ENCODE measurements at regions of chr2 and their contacts with region 1.

Region 1: GRCh38 chr2:187453078-187453641 is 5.1 kb upstream of the CALCRL start:
- H3K4me3 Mint-ChIP-seq: no peak overlapping the region
- H3K27ac Mint-ChIP-seq: no peak overlapping the region
- H3K4me1 Mint-ChIP-seq: peaks cover 6% of the 10 kb centered on the region
- H3K27me3 Mint-ChIP-seq: no peaks in the 10 kb centered on the region

Region 2: GRCh38 chr2:186503848-186504606 is 949.1 kb before region 1 on chr2:
- intact Hi-C with region 1: loop called (anchors 10 kb)
- H3K4me3 Mint-ChIP-seq: no peak overlapping the region
- H3K27ac Mint-ChIP-seq: peak overlapping the region; percentile 26
- H3K4me1 Mint-ChIP-seq: peaks cover 7% of the 10 kb centered on the region
- H3K27me3 Mint-ChIP-seq: no peaks in the 10 kb centered on the region

Region 3: GRCh38 chr2:186664385-186665043 is 788.6 kb before region 1 on chr2:
- intact Hi-C with region 1: loop called (anchors 10 kb)
- H3K4me3 Mint-ChIP-seq: no peak overlapping the region
- H3K27ac Mint-ChIP-seq: no peak overlapping the region
- H3K4me1 Mint-ChIP-seq: no peaks in the 10 kb centered on the region
- H3K27me3 Mint-ChIP-seq: no peaks in the 10 kb centered on the region

Region 4: GRCh38 chr2:186862869-186863709 is 590.1 kb before region 1 on chr2:
- intact Hi-C with region 1: loop called (anchors 2 kb)
- H3K4me3 Mint-ChIP-seq: no peak overlapping the region
- H3K27ac Mint-ChIP-seq: no peak overlapping the region
- H3K4me1 Mint-ChIP-seq: no peaks in the 10 kb centered on the region
- H3K27me3 Mint-ChIP-seq: no peaks in the 10 kb centered on the region

Region 5: GRCh38 chr2:186903216-186903615 is 549.9 kb before region 1 on chr2:
- intact Hi-C with region 1: loop called (anchors 1 kb)
- H3K4me3 Mint-ChIP-seq: no peak overlapping the region
- H3K27ac Mint-ChIP-seq: no peak overlapping the region
- H3K4me1 Mint-ChIP-seq: no peaks in the 10 kb centered on the region
- H3K27me3 Mint-ChIP-seq: no peaks in the 10 kb centered on the region

Region 6: DNA sequence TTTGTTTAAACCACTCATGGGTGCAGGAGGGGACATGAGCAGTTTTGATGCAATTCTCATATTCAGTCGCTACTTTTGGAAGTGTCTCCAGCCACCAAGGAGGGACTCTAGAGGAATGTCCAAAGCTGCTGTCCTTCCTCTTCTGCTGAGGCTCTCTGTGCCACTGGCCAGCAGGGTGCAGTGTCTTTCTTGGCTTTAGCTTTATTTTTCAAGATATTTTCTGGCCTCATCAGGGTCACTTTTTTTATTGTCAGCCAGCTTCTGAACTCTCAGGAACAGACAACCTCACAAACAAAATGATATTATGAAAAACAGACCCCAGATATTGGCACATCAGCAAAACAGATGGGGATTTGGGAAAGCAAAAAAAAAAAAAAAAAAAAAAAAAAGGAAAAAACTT is 314.9 kb before region 1 on chr2:
- intact Hi-C with region 1: loop called (anchors 2 kb)
- H3K4me3 Mint-ChIP-seq: no peak overlapping the region
- H3K27ac Mint-ChIP-seq: no peak overlapping the region
- H3K4me1 Mint-ChIP-seq: no peaks in the 10 kb centered on the region
- H3K27me3 Mint-ChIP-seq: no peaks in the 10 kb centered on the region

Region 7: DNA sequence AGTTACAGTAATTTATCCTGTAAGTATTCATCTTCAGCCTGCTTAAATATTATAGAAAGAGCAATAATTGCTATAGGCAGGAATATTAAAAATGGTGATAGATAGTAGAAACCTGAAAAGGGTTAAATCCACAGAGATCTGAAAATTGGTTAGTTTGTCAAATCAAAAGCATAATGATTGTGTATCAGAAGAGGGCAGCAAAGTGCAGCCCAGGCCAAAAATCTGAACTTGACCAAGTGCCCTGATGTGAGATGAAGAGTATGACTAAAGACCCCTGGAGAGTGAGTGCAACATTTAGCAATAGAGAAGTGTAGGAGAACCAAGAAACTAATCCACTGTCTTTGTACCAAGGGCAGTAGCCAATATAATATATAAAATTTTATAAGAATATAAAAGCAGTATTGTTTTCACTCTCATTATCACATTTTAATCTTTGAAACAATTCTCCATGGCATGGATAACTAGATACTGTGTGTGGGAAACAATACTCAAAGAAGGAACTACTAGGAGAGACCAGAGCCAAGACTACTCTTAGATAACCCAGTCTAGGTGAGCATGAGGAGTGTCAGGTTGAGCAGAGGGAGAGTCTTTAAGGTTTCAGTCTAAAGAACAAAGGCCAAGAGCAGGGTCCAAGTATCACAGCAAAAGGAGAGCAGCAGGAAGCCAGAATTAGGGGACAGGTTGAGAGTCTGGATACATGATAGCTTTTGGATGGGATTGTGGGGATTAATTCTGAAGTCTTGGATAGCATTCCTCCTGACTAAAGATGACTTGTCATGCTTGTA is 153.8 kb before region 1 on chr2:
- intact Hi-C with region 1: loop called (anchors 2 kb)
- H3K4me3 Mint-ChIP-seq: no peak overlapping the region
- H3K27ac Mint-ChIP-seq: peak overlapping the region; percentile 5
- H3K4me1 Mint-ChIP-seq: peaks cover 9% of the 10 kb centered on the region
- H3K27me3 Mint-ChIP-seq: no peaks in the 10 kb centered on the region

Region 8: DNA sequence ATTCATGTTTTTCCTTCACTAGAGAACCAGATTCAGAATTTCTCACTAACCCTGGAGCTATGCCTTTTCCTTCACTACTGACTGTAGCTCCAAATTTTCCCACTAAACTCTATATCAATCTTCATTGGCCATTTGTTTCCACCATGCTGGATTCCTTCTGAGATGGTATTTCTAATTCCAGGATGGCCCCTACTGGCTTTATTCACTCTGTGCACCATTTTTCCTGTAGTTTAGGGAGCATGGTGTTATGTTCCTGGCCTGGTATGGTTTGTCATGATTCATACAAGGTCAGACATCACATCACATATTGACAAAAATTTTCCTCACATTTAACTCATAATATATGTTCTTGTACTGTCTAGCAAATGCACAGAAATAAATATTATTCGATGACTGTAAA is 330.3 kb after region 1 on chr2:
- intact Hi-C with region 1: no loop called
- H3K4me3 Mint-ChIP-seq: no peak overlapping the region
- H3K27ac Mint-ChIP-seq: no peak overlapping the region
- H3K4me1 Mint-ChIP-seq: no peaks in the 10 kb centered on the region
- H3K27me3 Mint-ChIP-seq: no peaks in the 10 kb centered on the region

Measured in dendritic cell treated with granulocyte-macrophage colony-stimulating factor and Interleukin-4, amounts not matched to agents 40 ng/mL and 50 ng/mL, for 4 days (primary cell).